Activated CD4-positive, alpha-beta T cell treated with anti-CD3 and anti-CD28 coated beads for 36 hours (primary cell): ENCODE measurements at regions of chr15 and their contacts with region 1.

Region 1: DNA sequence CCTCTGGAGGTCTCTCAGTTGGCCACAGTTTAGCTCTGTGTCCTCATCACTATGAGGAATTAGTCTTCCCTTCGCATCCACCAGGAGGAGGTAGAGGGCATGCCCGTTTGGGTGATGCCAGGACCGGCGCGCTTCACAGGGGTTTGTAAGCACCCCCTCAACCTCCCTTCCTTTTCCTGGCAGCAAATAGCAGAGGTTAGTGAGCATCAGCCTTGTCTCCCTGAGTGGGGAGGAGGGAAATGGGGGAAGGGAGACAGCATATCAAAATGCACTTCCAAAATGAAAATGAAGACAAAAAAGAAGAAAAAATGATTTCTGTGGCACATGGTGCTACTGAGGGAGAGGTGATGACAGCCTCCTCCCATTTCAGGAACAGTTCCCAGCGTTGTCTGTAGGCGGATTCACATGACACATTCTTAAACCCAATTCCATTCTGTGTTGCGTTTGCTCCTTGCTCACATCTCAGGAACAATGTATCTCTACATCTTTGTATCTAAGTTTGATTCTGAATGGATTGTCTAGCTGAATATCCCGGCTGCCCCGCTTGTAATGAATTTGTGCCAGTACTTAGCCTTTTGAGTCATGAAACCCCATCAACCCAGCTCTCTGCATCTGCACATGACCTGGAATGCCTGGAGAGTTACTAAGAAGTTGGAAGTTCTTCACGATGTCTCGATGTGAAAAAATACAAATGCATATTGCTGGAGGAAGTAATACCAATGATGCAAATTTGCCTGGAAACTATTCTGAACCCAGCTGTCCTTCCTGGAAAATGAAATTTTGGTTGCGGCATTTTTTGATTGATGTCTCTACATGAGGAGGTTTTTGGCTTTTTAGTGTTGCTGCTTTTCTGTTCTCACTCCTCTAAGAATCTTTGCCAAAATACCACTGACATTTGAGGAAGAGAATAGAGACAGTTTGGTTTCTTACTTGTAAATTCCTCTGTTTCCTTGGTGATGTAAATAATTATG is 45.2 kb downstream of the TYRO3 start:
- DNase-seq: peak; percentile 75
- ATAC-seq: peak; percentile 96
- H3K4me3 Mint-ChIP-seq: peak overlapping the region; percentile 58
- H3K27ac Mint-ChIP-seq: peak overlapping the region; percentile 40
- H3K4me1 Mint-ChIP-seq: peaks cover 11% of the 10 kb centered on the region
- H3K27me3 Mint-ChIP-seq: peaks cover 14% of the 10 kb centered on the region

Region 2: GRCh38 chr15:41585127-41586047 is 18.8 kb before region 1 on chr15:
- CTCF ChIA-PET with region 1: interaction called, 11 read pairs
- POLR2A ChIA-PET with region 1: no interaction called
- intact Hi-C with region 1: no loop called
- DNase-seq: peak; percentile 63
- ATAC-seq: peak; percentile 69
- H3K4me3 Mint-ChIP-seq: peak overlapping the region; percentile 30
- H3K27ac Mint-ChIP-seq: no peak overlapping the region
- H3K4me1 Mint-ChIP-seq: peaks cover 6% of the 10 kb centered on the region
- H3K27me3 Mint-ChIP-seq: peaks cover 30% of the 10 kb centered on the region